ENCODE measurements at regions of chr4 and their contacts with region 1.

Region 1: DNA sequence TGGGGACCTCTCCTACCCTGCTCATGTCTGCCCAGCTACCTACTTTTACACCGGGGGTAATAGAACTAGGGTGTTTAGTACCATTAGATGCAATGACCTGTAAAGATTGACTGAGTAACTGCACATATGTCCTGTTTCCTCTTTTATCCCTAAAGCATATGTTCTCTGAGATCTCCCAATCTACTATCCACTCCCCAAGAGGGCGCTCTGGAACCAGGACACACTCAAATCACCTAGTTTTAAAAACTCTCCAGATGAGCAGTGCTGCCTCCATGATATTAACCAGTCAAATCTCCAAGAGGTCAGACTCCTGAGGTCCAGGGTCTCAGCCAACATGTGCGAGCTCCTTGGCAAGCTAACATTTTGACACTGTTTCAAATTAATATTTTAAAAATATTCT is 87.0 kb upstream of the TSPAN5 start:
- DNase-seq: peak; percentile 42 to 44
- H3K4me3 ChIP-seq: no peak overlapping the region
- H3K4me3 Mint-ChIP-seq: no peak overlapping the region
- H3K27ac Mint-ChIP-seq: peak overlapping the region; percentile 31
- H3K4me1 ChIP-seq: peaks cover 37% of the 10 kb centered on the region
- H3K4me1 Mint-ChIP-seq: peaks cover 22% of the 10 kb centered on the region
- H3K27me3 ChIP-seq: no peaks in the 10 kb centered on the region
- H3K27me3 Mint-ChIP-seq: no peaks in the 10 kb centered on the region
- CTCF ChIP-seq: peak; percentile 8 to 18

Region 2: GRCh38 chr4:98688411-98689290 is 56.7 kb before region 1 on chr4:
- CTCF ChIA-PET with region 1: no interaction called
- POLR2A ChIA-PET with region 1: no interaction called
- intact Hi-C with region 1: loop called (anchors 2 kb)
- DNase-seq: no peak
- H3K4me3 ChIP-seq: no peak overlapping the region
- H3K4me3 Mint-ChIP-seq: no peak overlapping the region
- H3K27ac Mint-ChIP-seq: no peak overlapping the region
- H3K4me1 ChIP-seq: peaks cover 24% of the 10 kb centered on the region
- H3K4me1 Mint-ChIP-seq: peaks cover 34% of the 10 kb centered on the region
- H3K27me3 ChIP-seq: no peaks in the 10 kb centered on the region
- H3K27me3 Mint-ChIP-seq: no peaks in the 10 kb centered on the region
- CTCF ChIP-seq: no peak

Region 3: DNA sequence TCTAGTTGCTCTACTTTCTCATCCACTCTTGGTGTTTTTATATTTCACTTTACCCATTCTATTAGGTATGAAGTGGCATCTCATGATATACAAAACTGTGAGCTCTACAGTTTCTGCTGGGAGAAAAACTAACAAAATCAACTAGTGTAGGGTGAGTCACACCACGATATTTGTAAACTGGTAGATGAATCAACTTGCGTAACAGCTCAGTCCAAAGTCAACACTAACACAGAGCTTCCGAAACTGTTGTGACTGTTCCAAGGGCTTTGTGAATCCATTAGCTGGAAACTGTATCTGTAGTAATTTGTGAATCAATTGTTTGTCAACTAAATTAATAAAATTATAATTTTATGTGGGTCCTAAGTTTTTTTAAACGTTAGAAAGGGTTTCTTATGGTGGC is 32.8 kb after region 1 on chr4:
- CTCF ChIA-PET with region 1: no interaction called
- POLR2A ChIA-PET with region 1: no interaction called
- intact Hi-C with region 1: loop called (anchors 1 kb)
- DNase-seq: peak in 1 of 2 experiments; percentile 49
- H3K4me3 ChIP-seq: no peak overlapping the region
- H3K4me3 Mint-ChIP-seq: no peak overlapping the region
- H3K27ac Mint-ChIP-seq: peak overlapping the region; percentile 69
- H3K4me1 ChIP-seq: peaks cover 47% of the 10 kb centered on the region
- H3K4me1 Mint-ChIP-seq: peaks cover 44% of the 10 kb centered on the region
- H3K27me3 ChIP-seq: no peaks in the 10 kb centered on the region
- H3K27me3 Mint-ChIP-seq: no peaks in the 10 kb centered on the region
- CTCF ChIP-seq: no peak

Region 4: DNA sequence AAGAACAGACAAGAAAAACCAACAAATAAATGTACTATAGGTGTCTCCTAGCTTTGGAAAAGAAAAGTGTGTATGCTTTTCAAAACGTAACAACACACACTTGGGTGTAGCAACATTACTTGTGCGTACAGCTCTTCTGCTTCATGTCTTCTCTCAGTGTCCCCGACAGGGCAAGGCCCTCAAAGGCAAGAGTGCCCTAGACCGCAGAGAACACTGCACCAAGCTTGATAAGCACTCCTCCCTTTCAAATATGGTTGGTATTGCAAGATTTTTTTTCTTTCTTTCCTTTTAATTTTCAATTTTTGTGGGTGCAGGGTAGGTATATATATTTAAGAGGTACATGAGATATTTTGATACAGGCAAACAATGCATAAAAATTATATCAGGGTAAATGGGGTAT is 76.8 kb after region 1 on chr4:
- CTCF ChIA-PET with region 1: no interaction called
- POLR2A ChIA-PET with region 1: interaction called, 3 read pairs
- intact Hi-C with region 1: loop called (anchors 1 kb)
- DNase-seq: no peak
- H3K4me3 ChIP-seq: no peak overlapping the region
- H3K4me3 Mint-ChIP-seq: no peak overlapping the region
- H3K27ac Mint-ChIP-seq: no peak overlapping the region
- H3K4me1 ChIP-seq: peaks cover 34% of the 10 kb centered on the region
- H3K4me1 Mint-ChIP-seq: peaks cover 34% of the 10 kb centered on the region
- H3K27me3 ChIP-seq: no peaks in the 10 kb centered on the region
- H3K27me3 Mint-ChIP-seq: no peaks in the 10 kb centered on the region
- CTCF ChIP-seq: no peak

Region 5: DNA sequence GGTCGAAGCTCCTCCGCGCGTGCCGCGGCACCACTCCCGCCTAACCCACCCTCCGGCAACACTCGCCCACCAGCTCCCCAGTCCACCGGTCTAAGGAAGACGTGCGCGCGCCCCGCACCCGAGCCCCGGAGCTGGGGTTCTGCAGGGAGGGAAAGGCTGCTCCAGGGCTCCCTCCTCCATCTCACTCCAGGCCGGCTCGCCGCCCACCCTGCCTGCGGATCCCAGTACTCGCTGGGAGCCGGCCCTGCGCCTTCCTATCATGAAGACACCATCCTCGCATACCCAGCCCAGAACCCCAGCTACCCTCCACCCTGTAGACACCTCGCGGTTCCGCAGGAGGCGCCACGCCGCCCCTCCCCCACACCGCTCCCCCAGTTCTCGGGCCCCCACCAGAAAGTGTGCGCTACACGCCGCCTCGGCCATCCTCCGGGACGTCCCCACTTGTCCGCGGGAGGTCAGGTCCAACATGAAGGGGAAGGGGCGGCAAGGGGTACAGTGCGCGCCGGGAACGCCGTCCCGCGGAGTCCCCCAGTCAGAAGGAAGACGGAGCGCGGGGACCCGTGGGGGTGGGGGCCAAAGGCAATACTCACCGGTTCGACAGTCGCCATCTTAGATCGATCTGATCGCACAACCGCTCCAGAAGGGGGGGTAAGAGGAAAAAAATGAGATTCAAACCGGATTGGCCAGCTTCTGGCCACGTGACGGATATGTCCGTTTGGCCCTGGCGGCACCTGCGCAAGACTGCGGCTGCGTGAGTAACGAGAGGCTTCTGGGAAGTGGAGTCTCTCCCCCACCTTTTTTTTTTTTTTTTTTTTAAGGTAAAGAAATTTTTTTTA is 183.4 kb after region 1 on chr4 and contains the start of gene EIF4E:
- CTCF ChIA-PET with region 1: no interaction called
- POLR2A ChIA-PET with region 1: interaction called, 15 read pairs
- intact Hi-C with region 1: loop called (anchors 5 kb)
- DNase-seq: peak; percentile 97 to 99
- H3K4me3 ChIP-seq: peak within 1 kb of the TSS; percentile 95
- H3K4me3 Mint-ChIP-seq: peak within 1 kb of the TSS; percentile 81
- H3K27ac Mint-ChIP-seq: peak within 1 kb of the TSS; percentile 85
- H3K4me1 ChIP-seq: peaks cover 6% of the 10 kb centered on the region
- H3K4me1 Mint-ChIP-seq: peaks cover 7% of the 10 kb centered on the region
- H3K27me3 ChIP-seq: no peaks in the 10 kb centered on the region
- H3K27me3 Mint-ChIP-seq: no peaks in the 10 kb centered on the region
- CTCF ChIP-seq: peak in 1 of 2 experiments; percentile 10
- total RNA-seq, gene EIF4E: 140 and 151 TPM in 2 replicates

Measured in Caco-2 (cell line).